ENCODE measurements at regions of chr15 and their contacts with region 1.

Region 1: DNA sequence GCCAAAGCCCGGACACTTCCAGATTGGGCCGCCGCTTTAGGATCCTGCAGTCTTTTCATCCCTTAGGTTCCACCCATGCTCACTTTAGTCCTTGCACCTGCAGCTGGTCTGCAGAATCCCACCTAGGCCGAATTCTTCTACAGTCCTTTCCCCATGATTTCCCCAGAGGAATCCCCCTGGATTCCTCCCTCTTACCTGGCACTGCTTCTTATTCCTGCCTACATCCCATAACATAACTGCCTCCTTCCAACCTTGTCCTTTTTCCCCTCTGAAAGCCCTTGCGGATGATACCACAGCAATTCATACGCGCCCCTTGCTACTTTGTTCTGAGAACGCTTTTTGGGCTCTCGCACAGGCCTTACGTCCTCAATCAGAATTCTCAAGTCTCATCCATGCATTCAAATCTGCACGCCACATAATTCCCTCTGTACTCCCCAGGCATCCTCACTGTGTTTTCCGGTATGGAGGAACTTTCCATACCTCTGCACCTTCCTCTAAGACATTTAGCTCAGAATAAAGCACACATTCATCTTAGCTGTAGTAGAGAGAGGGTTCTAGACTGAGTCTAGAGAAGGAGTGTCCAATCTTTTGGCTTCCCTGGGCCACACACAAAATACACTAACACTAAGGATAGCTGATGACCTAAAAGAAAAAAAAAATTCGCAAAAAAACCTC is 619 bp downstream of the EIF2AK4 start:
- DNase-seq: peak; percentile 30
- H3K4me3 ChIP-seq: peak overlapping the region; percentile 64 to 76 (median 68)
- H3K27ac ChIP-seq: peak overlapping the region; percentile 92
- H3K4me1 ChIP-seq: peaks cover 23% of the 10 kb centered on the region
- H3K27me3 ChIP-seq: no peaks in the 10 kb centered on the region
- CTCF ChIP-seq: no peak

Region 2: DNA sequence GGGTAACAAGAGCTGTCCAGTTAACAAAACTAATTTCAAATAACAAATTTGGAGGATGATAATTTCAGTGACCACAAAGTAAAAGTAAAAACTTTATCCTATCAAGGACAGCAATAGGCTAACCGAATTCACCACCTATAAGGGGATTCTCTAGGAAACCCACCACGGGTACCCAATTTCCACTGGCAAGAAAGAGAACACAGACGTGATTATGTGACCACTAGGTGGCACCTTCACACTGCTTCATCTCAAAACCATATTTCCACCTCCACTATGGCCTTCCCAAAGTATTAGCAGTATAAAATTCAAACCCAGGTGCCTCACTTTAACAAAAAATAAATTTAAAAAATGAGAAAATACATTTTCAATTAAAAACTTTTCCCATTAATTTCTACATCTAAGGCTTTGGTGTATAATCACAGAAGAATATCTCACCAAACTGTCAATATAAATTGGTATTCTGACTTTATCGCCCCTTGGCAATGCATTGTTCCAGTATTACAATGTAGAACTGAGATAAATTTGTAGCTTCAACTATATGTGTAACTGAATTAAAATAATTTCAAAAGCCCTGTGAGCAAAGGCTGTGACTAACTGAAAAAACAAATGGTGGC is 248.4 kb before region 1 on chr15:
- CTCF ChIA-PET with region 1: no interaction called
- dilution Hi-C with region 1: no loop called
- in situ Hi-C with region 1: no loop called
- intact Hi-C with region 1: loop called (anchors 5 kb)
- DNase-seq: peak; percentile 36
- H3K4me3 ChIP-seq: no peak overlapping the region
- H3K27ac ChIP-seq: no peak overlapping the region
- H3K4me1 ChIP-seq: no peaks in the 10 kb centered on the region
- H3K27me3 ChIP-seq: no peaks in the 10 kb centered on the region
- CTCF ChIP-seq: peak; percentile 70 to 71

Region 3: DNA sequence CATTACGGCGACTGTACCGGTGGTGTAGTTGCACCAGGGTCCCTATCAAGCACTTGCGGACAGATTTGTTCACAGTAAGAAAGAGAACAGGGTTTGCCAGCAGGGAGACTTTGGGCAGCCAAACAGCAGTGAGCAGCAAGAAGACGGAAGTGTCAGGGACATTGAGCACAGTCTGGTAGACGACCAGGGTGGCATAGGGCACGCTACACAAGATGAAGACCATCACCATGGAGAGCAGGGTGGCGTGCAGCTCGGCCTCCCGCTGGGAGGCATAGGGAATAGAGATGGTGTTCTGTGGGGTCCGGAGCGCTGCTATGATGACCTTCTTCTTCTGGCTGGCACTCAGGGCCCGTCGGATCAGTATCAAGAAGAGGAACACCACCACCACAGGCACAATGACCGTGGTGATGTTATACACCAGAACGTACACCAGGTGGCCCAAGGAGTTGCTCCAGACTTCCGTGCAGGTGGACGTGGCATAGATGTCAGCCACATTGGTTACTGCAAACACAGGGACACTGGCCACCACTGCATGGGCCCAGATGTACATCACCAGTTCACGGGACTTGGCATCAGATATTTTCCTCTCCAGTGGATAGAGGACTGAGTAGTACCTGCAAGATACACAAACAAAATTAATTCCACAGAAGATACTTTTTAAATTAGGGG is 132.8 kb before region 1 on chr15:
- CTCF ChIA-PET with region 1: no interaction called
- dilution Hi-C with region 1: no loop called
- in situ Hi-C with region 1: no loop called
- intact Hi-C with region 1: loop called (anchors 5 kb)
- DNase-seq: peak; percentile 28
- H3K4me3 ChIP-seq: no peak overlapping the region
- H3K27ac ChIP-seq: no peak overlapping the region
- H3K4me1 ChIP-seq: peaks cover 16% of the 10 kb centered on the region
- H3K27me3 ChIP-seq: no peaks in the 10 kb centered on the region
- CTCF ChIP-seq: peak; percentile 58 to 70

Region 4: GRCh38 chr15:39887832-39888231 is 46.7 kb before region 1 on chr15:
- CTCF ChIA-PET with region 1: interaction called, 4 read pairs
- dilution Hi-C with region 1: loop called (anchors 5 kb)
- in situ Hi-C with region 1: no loop called
- intact Hi-C with region 1: loop called (anchors 1 kb)
- DNase-seq: peak; percentile 65
- H3K4me3 ChIP-seq: no peak overlapping the region
- H3K27ac ChIP-seq: no peak overlapping the region
- H3K4me1 ChIP-seq: peaks cover 42% of the 10 kb centered on the region
- H3K27me3 ChIP-seq: no peaks in the 10 kb centered on the region
- CTCF ChIP-seq: peak; percentile 20 to 64

Region 5: DNA sequence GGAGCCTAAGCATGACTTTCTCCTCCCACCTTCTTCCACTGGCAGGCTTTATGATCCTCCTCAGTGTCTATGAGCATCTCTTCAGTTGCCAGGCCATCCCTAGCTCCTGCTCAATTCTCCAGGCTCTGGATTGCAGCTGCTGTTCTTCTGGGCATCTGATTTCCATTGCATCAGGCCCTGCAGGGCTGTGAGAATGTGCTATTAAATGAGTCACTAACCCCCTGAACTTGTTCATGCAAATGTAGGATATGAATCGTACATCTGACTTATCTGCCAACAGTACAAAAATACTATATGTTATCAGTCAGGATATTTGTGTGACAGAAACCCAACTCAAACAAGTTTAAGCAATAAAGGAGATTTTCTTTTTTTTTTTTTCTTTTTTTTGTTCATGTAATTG is 26.3 kb before region 1 on chr15:
- CTCF ChIA-PET with region 1: no interaction called
- dilution Hi-C with region 1: no loop called
- in situ Hi-C with region 1: no loop called
- intact Hi-C with region 1: loop called (anchors 1 kb)
- DNase-seq: peak; percentile 92
- H3K4me3 ChIP-seq: no peak overlapping the region
- H3K27ac ChIP-seq: peak overlapping the region; percentile 37
- H3K4me1 ChIP-seq: peaks cover 31% of the 10 kb centered on the region
- H3K27me3 ChIP-seq: no peaks in the 10 kb centered on the region
- CTCF ChIP-seq: no peak

Region 6: DNA sequence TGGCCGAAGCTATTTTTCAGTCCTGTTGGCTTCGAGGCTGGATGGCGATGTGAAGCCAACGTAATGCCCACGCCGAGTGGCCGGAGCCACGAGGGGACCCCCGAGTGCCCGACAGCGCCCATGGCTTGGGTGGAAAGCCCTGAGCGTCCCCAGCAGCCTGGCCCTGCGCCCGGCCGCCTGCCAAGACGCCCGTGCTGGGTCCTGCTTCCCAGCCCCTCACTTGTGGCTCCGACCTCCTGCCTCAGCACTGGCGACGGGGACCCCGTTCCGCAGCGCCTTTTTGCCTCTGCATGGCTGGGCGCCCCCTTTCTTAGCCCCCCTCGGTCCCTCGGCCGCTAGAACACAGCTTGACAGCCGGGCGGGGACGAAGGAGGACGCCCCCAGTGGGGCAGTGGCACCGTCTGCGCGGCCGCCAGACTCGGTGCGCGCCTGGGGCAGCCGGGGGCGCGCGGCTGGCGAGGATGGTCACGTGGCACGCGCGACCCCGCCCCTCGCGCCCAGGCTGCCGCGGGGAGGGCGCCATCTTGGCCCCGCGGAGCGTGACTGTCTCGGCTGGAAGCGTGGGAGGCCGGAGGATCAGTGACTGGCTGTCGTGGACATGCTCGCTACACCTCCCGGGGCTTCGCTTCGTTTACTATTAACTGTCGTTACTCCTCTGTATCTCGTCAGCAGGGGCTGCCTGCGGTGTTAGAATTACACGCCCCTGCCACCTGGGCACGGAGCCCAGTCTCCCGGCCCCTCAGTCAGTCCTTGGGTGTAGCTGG is 13.8 kb before region 1 on chr15:
- CTCF ChIA-PET with region 1: no interaction called
- dilution Hi-C with region 1: no loop called
- in situ Hi-C with region 1: no loop called
- intact Hi-C with region 1: loop called (anchors 2 kb)
- DNase-seq: peak; percentile 58
- H3K4me3 ChIP-seq: peak overlapping the region; percentile 69 to 89 (median 84)
- H3K27ac ChIP-seq: peak overlapping the region; percentile 86
- H3K4me1 ChIP-seq: peaks cover 26% of the 10 kb centered on the region
- H3K27me3 ChIP-seq: no peaks in the 10 kb centered on the region
- CTCF ChIP-seq: no peak

Region 7: GRCh38 chr15:39976291-39977274 is 42.0 kb after region 1 on chr15:
- CTCF ChIA-PET with region 1: no interaction called
- dilution Hi-C with region 1: loop called (anchors 5 kb)
- in situ Hi-C with region 1: no loop called
- intact Hi-C with region 1: no loop called
- DNase-seq: peak; percentile 39
- H3K4me3 ChIP-seq: peak overlapping the region; percentile 4 to 51 (median 46)
- H3K27ac ChIP-seq: peak overlapping the region; percentile 14
- H3K4me1 ChIP-seq: peaks cover 13% of the 10 kb centered on the region
- H3K27me3 ChIP-seq: no peaks in the 10 kb centered on the region
- CTCF ChIP-seq: peak; percentile 22 to 55